ENCODE measurements at regions of chr6 and their contacts with region 1.

Region 1: DNA sequence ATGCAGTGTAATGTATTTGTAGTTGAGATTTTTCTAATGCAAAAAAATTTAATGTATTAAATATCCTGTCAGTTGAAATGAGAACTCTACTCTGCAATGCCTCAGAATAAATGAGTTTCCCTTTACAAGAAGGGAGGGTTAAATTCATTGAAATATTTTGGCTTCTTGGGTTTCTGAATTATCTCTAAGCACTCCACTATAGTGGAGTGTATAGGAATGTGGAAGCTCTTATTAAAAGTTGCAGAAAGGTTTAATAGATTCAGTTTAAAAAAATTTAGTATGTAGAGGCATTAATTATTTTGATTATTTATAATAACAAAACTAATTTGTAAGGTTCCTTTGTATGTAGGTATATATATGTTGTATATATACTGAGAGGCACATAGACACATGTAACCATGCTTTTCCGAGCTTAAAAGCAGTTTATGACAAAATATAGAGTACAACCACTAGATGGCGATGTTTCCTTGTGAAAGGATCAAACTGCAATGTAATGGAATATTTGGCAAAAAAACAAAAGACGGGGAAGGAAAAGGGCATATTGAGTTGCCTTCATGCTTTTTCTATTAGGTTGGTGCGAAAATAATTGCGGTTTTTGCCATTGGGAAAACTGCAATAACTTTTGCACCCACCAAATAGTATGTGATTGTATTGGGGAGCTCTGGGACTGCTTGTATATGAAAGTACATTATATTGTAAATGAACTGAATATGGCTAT is 144.2 kb downstream of the MYO6 start:
- DNase-seq: peak; percentile 19
- ATAC-seq: peak; percentile 85
- H3K4me3 ChIP-seq: no peak overlapping the region
- H3K27ac ChIP-seq: no peak overlapping the region
- H3K4me1 ChIP-seq: no peaks in the 10 kb centered on the region
- H3K27me3 ChIP-seq: no peaks in the 10 kb centered on the region
- CTCF ChIP-seq: peak; percentile 57 to 65 (median 65)
- EP300 ChIP-seq: no peak
- POLR2A ChIP-seq: no peak
- RAD21 ChIP-seq: peak; percentile 81

Region 2: DNA sequence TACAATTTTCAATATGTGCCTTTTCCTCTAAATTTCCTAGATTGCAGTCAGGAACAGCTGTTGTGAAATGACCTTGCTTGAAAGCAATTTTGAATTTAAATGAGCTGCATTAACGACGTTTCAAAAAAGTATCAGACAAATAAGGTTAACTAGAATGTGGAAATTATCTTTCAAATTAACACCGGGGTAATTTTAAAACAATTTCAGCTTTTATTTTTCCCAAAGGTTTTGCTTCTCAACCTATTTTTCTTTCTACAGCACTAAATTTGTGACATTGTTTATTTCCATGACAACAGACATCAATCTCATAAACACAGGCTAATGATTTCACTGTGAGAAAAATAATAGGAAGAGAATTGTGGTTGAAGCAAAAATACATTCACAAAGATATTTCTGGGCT is 725.9 kb before region 1 on chr6:
- CTCF ChIA-PET with region 1: no interaction called
- POLR2A ChIA-PET with region 1: no interaction called
- RAD21 ChIA-PET with region 1: no interaction called
- SMC1A ChIA-PET with region 1: no interaction called
- in situ Hi-C with region 1: no loop called
- intact Hi-C with region 1: no loop called
- DNase-seq: no peak
- ATAC-seq: no peak
- H3K4me3 ChIP-seq: no peak overlapping the region
- H3K27ac ChIP-seq: no peak overlapping the region
- H3K4me1 ChIP-seq: no peaks in the 10 kb centered on the region
- H3K27me3 ChIP-seq: peaks cover 0 to 2% of the 10 kb centered on the region in 2 experiments; a peak in 2 of 4 replicates
- CTCF ChIP-seq: no peak
- EP300 ChIP-seq: no peak
- POLR2A ChIP-seq: no peak
- RAD21 ChIP-seq: no peak

Region 3: GRCh38 chr6:75855052-75855451 is 38.2 kb before region 1 on chr6:
- CTCF ChIA-PET with region 1: interaction called, 22 read pairs
- POLR2A ChIA-PET with region 1: no interaction called
- RAD21 ChIA-PET with region 1: interaction called, 9 read pairs
- SMC1A ChIA-PET with region 1: interaction called, 5 read pairs
- in situ Hi-C with region 1: no loop called
- intact Hi-C with region 1: no loop called
- DNase-seq: no peak
- ATAC-seq: peak; percentile 70
- H3K4me3 ChIP-seq: no peak overlapping the region
- H3K27ac ChIP-seq: no peak overlapping the region
- H3K4me1 ChIP-seq: no peaks in the 10 kb centered on the region
- H3K27me3 ChIP-seq: no peaks in the 10 kb centered on the region
- CTCF ChIP-seq: peak; percentile 48 to 56 (median 52); a peak in 5 of 6 replicates
- EP300 ChIP-seq: no peak
- POLR2A ChIP-seq: no peak
- RAD21 ChIP-seq: peak; percentile 53

Region 4: DNA sequence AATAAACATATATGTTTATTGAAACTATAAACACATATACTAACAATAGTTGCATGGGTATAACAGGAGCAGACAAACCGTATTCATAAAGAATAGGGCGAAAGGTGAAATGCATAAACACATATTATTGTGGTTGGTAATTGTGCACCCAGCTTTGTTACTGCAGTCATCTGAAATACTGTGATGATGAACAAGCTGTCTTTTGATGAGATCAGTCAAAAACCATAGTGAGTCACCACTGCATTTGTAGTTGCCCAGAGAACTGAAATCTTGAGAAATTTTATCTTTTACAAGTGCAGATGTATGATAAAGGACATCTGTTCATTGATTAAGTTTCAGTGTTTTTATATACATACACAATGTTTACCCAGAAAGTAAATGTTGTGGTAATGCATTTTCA is 10.5 kb before region 1 on chr6:
- CTCF ChIA-PET with region 1: interaction called, 157 read pairs
- POLR2A ChIA-PET with region 1: no interaction called
- RAD21 ChIA-PET with region 1: interaction called, 12 read pairs
- SMC1A ChIA-PET with region 1: interaction called, 16 read pairs
- in situ Hi-C with region 1: no loop called
- intact Hi-C with region 1: no loop called
- DNase-seq: no peak
- ATAC-seq: no peak
- H3K4me3 ChIP-seq: no peak overlapping the region
- H3K27ac ChIP-seq: no peak overlapping the region
- H3K4me1 ChIP-seq: no peaks in the 10 kb centered on the region
- H3K27me3 ChIP-seq: no peaks in the 10 kb centered on the region
- CTCF ChIP-seq: no peak
- EP300 ChIP-seq: no peak
- POLR2A ChIP-seq: no peak
- RAD21 ChIP-seq: no peak

Region 5: DNA sequence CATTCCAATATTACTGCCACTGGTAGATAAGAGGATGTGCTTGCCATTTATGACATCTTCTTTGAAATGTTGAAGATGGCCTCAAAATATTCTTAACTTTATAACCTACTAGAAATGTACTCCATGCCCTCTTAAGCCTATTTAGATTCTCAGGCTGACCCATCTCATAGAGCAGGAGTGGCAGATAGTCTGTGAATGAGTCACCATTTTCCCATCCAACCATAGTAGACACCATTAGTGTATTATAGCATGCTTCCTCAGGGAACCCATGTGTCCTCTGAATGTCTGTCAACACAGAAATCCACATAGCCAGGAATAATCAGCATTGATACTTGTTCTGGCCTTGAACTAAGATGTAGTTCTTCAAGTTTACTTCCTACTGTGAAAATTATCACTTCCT is 29.0 kb after region 1 on chr6:
- CTCF ChIA-PET with region 1: interaction called, 26 read pairs
- POLR2A ChIA-PET with region 1: no interaction called
- RAD21 ChIA-PET with region 1: no interaction called
- SMC1A ChIA-PET with region 1: interaction called, 3 read pairs
- in situ Hi-C with region 1: no loop called
- intact Hi-C with region 1: no loop called
- DNase-seq: no peak
- ATAC-seq: no peak
- H3K4me3 ChIP-seq: no peak overlapping the region
- H3K27ac ChIP-seq: no peak overlapping the region
- H3K4me1 ChIP-seq: no peaks in the 10 kb centered on the region
- H3K27me3 ChIP-seq: no peaks in the 10 kb centered on the region
- CTCF ChIP-seq: no peak
- EP300 ChIP-seq: no peak
- POLR2A ChIP-seq: no peak
- RAD21 ChIP-seq: no peak

Region 6: DNA sequence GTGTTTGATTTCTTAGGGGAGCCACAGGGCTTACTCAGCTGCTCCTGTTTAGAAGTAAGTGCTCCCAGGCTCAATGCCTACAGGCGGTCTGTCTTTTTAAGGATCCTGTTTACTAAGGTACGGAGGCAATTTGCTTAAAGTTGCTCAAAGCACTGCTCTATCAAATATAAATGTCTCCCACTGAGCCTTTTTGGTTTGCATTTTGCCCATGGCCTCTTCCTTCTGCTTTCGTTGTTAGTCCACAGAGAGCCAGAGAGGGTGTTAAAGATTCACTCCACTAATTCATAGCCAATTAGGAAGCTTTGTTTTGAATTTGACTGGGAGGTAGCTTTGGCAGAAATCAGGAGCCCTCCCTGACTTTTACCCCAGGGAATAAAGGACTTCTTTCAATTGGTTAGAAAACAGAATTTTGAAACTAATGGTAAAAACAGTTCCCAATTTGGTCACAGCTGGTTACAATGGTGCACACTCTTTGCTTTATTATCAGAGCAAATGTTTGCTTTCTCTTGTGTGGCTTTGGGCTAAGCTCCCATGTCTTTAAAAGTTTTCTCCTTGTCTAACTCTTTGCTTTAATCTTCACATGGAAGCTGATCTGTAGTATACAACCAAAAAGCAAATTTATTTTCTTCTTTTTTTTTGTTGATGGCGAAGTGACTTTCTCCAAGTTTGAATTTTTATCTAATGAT is 53.1 kb after region 1 on chr6:
- CTCF ChIA-PET with region 1: interaction called, 15 read pairs
- POLR2A ChIA-PET with region 1: no interaction called
- RAD21 ChIA-PET with region 1: interaction called, 4 read pairs
- SMC1A ChIA-PET with region 1: no interaction called
- in situ Hi-C with region 1: no loop called
- intact Hi-C with region 1: no loop called
- DNase-seq: peak; percentile 19
- ATAC-seq: peak; percentile 77
- H3K4me3 ChIP-seq: no peak overlapping the region
- H3K27ac ChIP-seq: no peak overlapping the region
- H3K4me1 ChIP-seq: no peaks in the 10 kb centered on the region; the same call in 1 of the 2 replicates
- H3K27me3 ChIP-seq: no peaks in the 10 kb centered on the region
- CTCF ChIP-seq: no peak
- EP300 ChIP-seq: no peak
- POLR2A ChIP-seq: no peak
- RAD21 ChIP-seq: no peak

Region 7: DNA sequence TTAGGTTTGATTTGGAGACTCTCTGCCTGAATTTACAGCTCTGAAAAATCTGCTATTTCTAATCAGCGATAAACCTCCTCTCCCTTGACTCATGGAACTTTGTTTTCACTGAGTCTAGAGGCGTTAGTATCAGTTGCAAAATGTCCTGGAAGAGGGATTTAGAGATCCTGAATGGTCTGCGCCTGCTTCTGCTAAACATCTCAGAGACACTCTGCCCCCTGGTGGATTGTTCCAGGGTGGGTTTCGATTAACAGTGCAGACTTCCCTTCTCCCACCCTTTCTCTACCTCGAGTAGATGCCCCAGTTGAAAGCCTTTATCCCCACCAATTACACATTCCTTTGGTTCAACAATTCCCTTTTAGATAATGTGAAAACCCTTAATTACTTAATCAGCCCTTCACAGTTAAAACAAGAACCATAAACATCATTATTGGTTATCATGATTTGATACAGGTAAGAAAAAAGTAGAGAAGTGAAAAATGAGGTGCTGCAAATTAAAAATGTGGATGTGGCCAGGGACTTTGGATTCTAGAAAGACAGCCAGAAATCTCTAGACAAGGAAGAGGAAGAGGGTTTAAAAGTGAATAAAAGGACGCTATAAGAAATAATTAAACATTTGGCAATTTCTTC is 1564.6 kb after region 1 on chr6:
- CTCF ChIA-PET with region 1: interaction called, 6 read pairs
- POLR2A ChIA-PET with region 1: no interaction called
- RAD21 ChIA-PET with region 1: no interaction called
- SMC1A ChIA-PET with region 1: interaction called, 4 read pairs
- in situ Hi-C with region 1: no loop called
- intact Hi-C with region 1: loop called (anchors 2 kb)
- DNase-seq: no peak
- ATAC-seq: peak; percentile 79
- H3K4me3 ChIP-seq: no peak overlapping the region
- H3K27ac ChIP-seq: no peak overlapping the region
- H3K4me1 ChIP-seq: no peaks in the 10 kb centered on the region
- H3K27me3 ChIP-seq: peaks cover 4% of the 10 kb centered on the region in 2 experiments
- CTCF ChIP-seq: peak; percentile 69 to 71 (median 70)
- EP300 ChIP-seq: no peak
- POLR2A ChIP-seq: no peak
- RAD21 ChIP-seq: peak; percentile 56

Measured in GM12878 (cell line).